Ovary (tissue), 10 donors: ENCODE measurements at regions of chr1 and their contacts with region 1.

Region 1: DNA sequence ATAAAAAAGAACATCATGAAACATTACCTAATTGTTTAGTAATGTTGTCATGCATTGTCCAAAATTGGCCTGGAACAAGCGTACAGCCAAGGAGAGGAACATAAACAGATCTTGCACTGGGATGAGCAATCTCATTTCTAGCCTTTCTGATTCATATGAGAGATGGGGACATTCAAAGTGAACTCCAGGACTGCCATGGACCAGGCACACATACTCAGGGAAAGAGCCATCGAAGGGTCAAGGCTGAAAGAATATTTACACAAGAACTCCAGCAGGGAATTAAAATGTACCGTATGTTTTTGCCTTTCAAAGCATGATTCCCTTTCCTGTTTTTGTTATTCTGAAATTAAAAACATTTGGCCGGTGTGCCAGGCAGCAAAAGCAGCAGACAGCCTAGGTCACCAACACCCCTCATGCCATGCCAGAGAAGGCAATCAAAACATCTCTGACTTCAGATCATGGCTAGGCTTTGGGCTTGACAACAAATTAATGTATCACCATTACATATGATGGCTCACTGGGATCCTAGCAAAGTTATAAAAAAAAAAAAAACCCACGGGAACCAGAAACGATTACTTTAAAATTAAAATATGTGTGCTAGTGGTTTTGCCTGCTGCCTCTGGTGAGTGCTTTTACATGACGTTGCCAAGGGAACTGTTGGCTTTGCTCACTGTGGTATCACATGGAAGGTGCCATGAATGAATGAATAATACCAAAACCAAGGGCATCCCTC is 159.8 kb downstream of the TGFBR3 start:
- DNase-seq: peak in 4 of 5 donors; percentile 36 to 79 (median 62)
- H3K4me3 ChIP-seq: no peak overlapping the region
- H3K27ac ChIP-seq: peak overlapping the region; percentile 69 to 78
- H3K4me1 ChIP-seq: peaks cover 18% of the 10 kb centered on the region
- H3K27me3 ChIP-seq: no peaks in the 10 kb centered on the region
- CTCF ChIP-seq: peak in 1 of 3 donors; percentile 25
- EP300 ChIP-seq: peak; percentile 55
- POLR2A ChIP-seq: no peak

Region 2: GRCh38 chr1:91650764-91651163 is 75.4 kb before region 1 on chr1:
- intact Hi-C with region 1: loop called in 1 of 4 experiments (anchors 2 kb)
- DNase-seq: peak; percentile 76 to 93 (median 84)
- H3K4me3 ChIP-seq: no peak overlapping the region
- H3K27ac ChIP-seq: peak overlapping the region; percentile 90 to 92
- H3K4me1 ChIP-seq: peaks cover 10% of the 10 kb centered on the region
- H3K27me3 ChIP-seq: no peaks in the 10 kb centered on the region
- CTCF ChIP-seq: no peak
- EP300 ChIP-seq: peak; percentile 90
- POLR2A ChIP-seq: no peak

Region 3: DNA sequence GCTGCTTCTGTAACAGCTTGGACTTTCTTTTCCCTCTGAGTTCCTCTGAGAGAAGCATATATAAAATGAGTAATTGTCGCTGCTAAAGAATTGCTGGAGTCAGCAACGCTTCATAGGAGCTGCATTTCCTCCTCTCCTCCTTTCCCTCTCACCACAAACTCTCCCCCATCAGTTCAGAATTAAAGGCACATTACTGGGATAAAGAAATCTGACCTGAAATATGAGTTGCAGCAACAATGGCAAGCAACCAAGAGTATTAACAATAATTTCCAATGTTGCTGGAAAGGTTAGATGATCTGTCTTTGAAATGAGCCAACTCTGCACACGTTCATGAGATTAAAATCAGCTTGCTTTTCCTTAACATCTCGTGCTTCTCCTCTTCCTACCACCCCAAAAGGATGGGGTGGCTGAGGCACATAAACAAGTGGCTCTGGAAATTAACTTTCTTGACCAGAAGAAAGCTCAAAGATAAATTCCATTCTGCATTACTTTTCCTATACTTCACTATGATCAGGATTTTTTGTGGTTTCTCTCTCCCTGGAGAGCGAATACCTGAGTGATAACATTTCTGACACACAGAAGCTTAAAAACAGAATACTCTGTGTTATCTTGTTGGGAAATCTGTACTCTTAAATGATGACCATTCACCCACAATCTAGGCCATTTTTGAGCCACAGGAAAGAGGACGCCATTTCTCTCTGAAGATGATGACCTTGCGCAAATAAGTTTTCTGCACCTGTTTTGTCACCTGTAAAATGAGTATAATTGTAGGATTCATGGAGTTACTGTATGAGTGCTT is 69.6 kb after region 1 on chr1:
- intact Hi-C with region 1: no loop called
- DNase-seq: no peak
- H3K4me3 ChIP-seq: no peak overlapping the region
- H3K27ac ChIP-seq: no peak overlapping the region
- H3K4me1 ChIP-seq: peaks cover 22% of the 10 kb centered on the region
- H3K27me3 ChIP-seq: no peaks in the 10 kb centered on the region
- CTCF ChIP-seq: no peak
- EP300 ChIP-seq: no peak
- POLR2A ChIP-seq: no peak